ENCODE measurements at regions of chr21 and their contacts with region 1.

Region 1: GRCh38 chr21:15826147-15826780 is 96.5 kb downstream of the USP25 start:
- DNase-seq: peak; percentile 83
- H3K4me3 Mint-ChIP-seq: no peak overlapping the region
- H3K27ac Mint-ChIP-seq: no peak overlapping the region
- H3K4me1 Mint-ChIP-seq: peaks cover 6% of the 10 kb centered on the region
- H3K27me3 Mint-ChIP-seq: no peaks in the 10 kb centered on the region
- CTCF ChIP-seq: peak; percentile 60

Region 2: DNA sequence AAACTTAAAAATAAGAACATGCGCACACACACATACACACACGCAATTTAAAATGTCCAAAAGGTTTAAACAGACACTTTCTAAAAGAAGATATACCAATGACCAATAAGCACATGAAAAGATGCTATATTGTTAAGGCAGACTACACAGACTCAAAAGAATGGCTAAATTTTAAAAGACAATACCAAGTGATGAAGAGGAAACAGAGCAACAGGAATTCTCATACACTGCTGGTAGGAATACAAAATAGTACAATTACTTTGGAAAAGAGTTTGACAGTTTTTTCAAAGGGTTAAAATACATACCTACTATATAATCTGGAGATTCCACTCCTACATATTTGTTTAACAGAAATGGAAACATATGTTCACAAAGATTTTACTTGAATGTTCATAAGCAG is 1040.6 kb before region 1 on chr21:
- CTCF ChIA-PET with region 1: no interaction called
- POLR2A ChIA-PET with region 1: no interaction called
- intact Hi-C with region 1: no loop called
- DNase-seq: no peak
- H3K4me3 Mint-ChIP-seq: no peak overlapping the region
- H3K27ac Mint-ChIP-seq: no peak overlapping the region
- H3K4me1 Mint-ChIP-seq: no peaks in the 10 kb centered on the region
- H3K27me3 Mint-ChIP-seq: no peaks in the 10 kb centered on the region
- CTCF ChIP-seq: no peak

Region 3: GRCh38 chr21:15669247-15669646 is 157.0 kb before region 1 on chr21:
- CTCF ChIA-PET with region 1: no interaction called
- POLR2A ChIA-PET with region 1: no interaction called
- intact Hi-C with region 1: no loop called
- DNase-seq: peak; percentile 59
- H3K4me3 Mint-ChIP-seq: no peak overlapping the region
- H3K27ac Mint-ChIP-seq: peak overlapping the region; percentile 68
- H3K4me1 Mint-ChIP-seq: peaks cover 16% of the 10 kb centered on the region
- H3K27me3 Mint-ChIP-seq: no peaks in the 10 kb centered on the region
- CTCF ChIP-seq: no peak

Region 4: DNA sequence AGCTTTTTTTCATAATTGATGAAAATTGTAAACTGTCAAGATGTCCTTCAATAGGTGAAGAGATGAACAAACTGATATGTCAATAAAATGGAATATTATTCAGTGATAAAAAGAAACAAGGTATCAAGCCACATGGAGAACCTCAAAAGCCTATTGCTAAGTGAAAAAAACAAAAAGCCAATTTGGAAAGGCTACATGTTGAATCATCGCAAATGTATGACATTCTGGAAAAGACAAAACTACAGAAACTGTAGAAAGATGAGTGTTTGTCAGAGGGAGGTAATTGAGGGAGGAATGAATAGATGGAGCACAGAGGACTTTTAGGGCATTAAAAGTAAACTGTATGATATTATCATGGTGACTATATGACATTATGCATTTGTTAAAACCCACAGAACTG is 131.0 kb before region 1 on chr21:
- CTCF ChIA-PET with region 1: no interaction called
- POLR2A ChIA-PET with region 1: no interaction called
- intact Hi-C with region 1: no loop called
- DNase-seq: no peak
- H3K4me3 Mint-ChIP-seq: no peak overlapping the region
- H3K27ac Mint-ChIP-seq: no peak overlapping the region
- H3K4me1 Mint-ChIP-seq: no peaks in the 10 kb centered on the region
- H3K27me3 Mint-ChIP-seq: no peaks in the 10 kb centered on the region
- CTCF ChIP-seq: no peak

Region 5: DNA sequence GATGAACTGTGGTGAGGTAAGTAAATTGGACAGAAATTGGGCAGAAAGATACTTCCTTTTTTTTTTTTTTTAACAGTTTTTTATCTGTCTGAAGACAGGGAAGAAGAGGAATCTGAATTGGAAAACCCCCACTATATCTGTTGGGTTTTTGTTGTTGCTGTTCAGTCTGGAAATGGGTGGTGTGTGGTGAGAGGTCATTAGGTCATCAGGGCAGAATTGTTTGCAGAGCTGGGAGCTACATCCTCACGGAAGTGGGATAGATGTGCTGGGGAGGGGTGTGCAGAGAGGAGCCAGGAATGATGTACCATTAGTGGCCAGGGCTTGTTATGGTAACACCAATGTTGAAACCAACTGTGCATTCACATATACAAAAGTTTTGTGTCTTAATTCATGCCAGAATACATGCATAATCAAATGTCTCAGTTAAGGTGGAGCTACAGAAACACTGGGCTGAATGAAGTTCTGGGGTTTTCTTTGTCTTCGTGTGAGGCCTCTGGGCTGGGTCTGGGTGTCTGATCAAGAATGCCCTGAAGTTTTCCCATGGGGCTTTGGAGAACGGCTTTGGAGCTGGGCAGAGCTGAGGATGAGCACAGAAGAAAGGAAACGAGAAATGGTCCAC is 84.1 kb before region 1 on chr21:
- CTCF ChIA-PET with region 1: interaction called, 11 read pairs
- POLR2A ChIA-PET with region 1: no interaction called
- intact Hi-C with region 1: no loop called
- DNase-seq: no peak
- H3K4me3 Mint-ChIP-seq: peak overlapping the region; percentile 45
- H3K27ac Mint-ChIP-seq: peak overlapping the region; percentile 44
- H3K4me1 Mint-ChIP-seq: peaks cover 60% of the 10 kb centered on the region
- H3K27me3 Mint-ChIP-seq: no peaks in the 10 kb centered on the region
- CTCF ChIP-seq: no peak

Region 6: GRCh38 chr21:15752763-15753407 is 73.4 kb before region 1 on chr21:
- CTCF ChIA-PET with region 1: no interaction called
- POLR2A ChIA-PET with region 1: no interaction called
- intact Hi-C with region 1: no loop called
- DNase-seq: no peak
- H3K4me3 Mint-ChIP-seq: no peak overlapping the region
- H3K27ac Mint-ChIP-seq: peak overlapping the region; percentile 86
- H3K4me1 Mint-ChIP-seq: peaks cover 61% of the 10 kb centered on the region
- H3K27me3 Mint-ChIP-seq: no peaks in the 10 kb centered on the region
- CTCF ChIP-seq: no peak

Region 7: GRCh38 chr21:15775981-15776380 is 50.3 kb before region 1 on chr21:
- CTCF ChIA-PET with region 1: interaction called, 4 read pairs
- POLR2A ChIA-PET with region 1: interaction called, 3 read pairs
- intact Hi-C with region 1: loop called (anchors 5 kb)
- DNase-seq: peak; percentile 71
- H3K4me3 Mint-ChIP-seq: peak overlapping the region; percentile 52
- H3K27ac Mint-ChIP-seq: peak overlapping the region; percentile 81
- H3K4me1 Mint-ChIP-seq: peaks cover 39% of the 10 kb centered on the region
- H3K27me3 Mint-ChIP-seq: no peaks in the 10 kb centered on the region
- CTCF ChIP-seq: no peak